Gastrocnemius medialis (tissue), 4 donors: ENCODE measurements at regions of chr3 and their contacts with region 1.

Region 1: GRCh38 chr3:149969940-149970715 is 567 bp downstream of the PFN2 start:
- DNase-seq: peak; percentile 75 to 90
- ATAC-seq: peak; percentile 48 to 59
- H3K4me3 ChIP-seq: peak overlapping the region; percentile 68 to 85 (median 81)
- H3K27ac ChIP-seq: peak overlapping the region; percentile 89 to 97 (median 97)
- H3K4me1 ChIP-seq: peaks cover 19 to 22% of the 10 kb centered on the region in 2 donors
- H3K27me3 ChIP-seq: no peaks in the 10 kb centered on the region
- CTCF ChIP-seq: no peak
- POLR2A ChIP-seq: peak; percentile 46 to 68

Region 2: GRCh38 chr3:149009732-149010131 is 960.4 kb before region 1 on chr3:
- in situ Hi-C with region 1: no loop called
- intact Hi-C with region 1: loop called (anchors 10 kb)
- DNase-seq: no peak
- ATAC-seq: peak in 1 of 2 donors; percentile 10
- H3K4me3 ChIP-seq: no peak overlapping the region
- H3K27ac ChIP-seq: peak overlapping the region; percentile 98 to 100 (median 100)
- H3K4me1 ChIP-seq: peaks cover 87 to 88% of the 10 kb centered on the region in 2 donors
- H3K27me3 ChIP-seq: no peaks in the 10 kb centered on the region
- CTCF ChIP-seq: no peak
- POLR2A ChIP-seq: no peak

Region 3: GRCh38 chr3:150035301-150035779 is 65.2 kb after region 1 on chr3:
- in situ Hi-C with region 1: no loop called
- intact Hi-C with region 1: loop called (anchors 2 kb)
- DNase-seq: peak; percentile 75 to 77
- ATAC-seq: peak; percentile 77 to 87
- H3K4me3 ChIP-seq: peak overlapping the region in 1 of 4 donors; percentile 18
- H3K27ac ChIP-seq: peak overlapping the region; percentile 91 to 98 (median 94)
- H3K4me1 ChIP-seq: peaks cover 17 to 31% of the 10 kb centered on the region in 2 donors
- H3K27me3 ChIP-seq: no peaks in the 10 kb centered on the region
- CTCF ChIP-seq: peak in 2 of 5 experiments; percentile 19 to 25
- POLR2A ChIP-seq: no peak

Region 4: DNA sequence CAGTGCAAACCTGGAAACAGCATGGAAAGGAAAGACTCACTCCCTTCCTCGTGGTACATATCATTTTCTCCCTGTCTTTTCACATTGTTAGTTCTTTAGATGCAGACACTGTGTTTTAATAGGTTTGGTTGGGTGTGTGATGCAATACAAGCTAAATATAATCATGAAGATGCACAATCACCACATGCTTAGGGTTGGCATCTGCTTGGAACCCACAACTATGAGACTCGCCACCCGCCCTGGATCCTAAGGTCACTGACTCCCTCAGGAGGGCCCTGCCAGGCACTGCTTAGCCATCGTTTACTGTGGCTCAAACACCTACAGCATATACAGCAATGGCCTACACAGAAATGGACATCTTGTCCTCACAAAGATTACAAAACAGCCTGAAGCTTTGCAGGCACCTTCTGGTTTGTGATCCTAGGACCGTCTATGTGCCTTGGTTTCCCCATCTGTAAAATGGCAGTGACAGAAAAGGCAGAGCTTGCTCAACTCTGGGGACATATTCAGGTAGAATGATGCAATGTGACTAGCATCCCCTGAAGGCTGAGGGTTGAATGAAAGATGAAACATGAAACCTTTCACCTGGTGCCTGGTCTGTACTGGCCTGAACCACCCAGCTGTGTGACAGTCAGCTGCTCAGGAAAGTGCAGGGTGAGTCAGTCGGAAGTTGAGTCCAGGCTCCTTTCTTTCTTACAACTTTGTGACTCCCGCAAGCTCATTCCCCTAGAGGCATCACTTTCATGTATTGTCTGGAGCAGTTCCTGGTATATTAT is 124.2 kb after region 1 on chr3:
- in situ Hi-C with region 1: no loop called
- intact Hi-C with region 1: loop called (anchors 1 kb)
- DNase-seq: peak; percentile 91 to 95
- ATAC-seq: peak; percentile 79 to 88
- H3K4me3 ChIP-seq: peak overlapping the region in 1 of 4 donors; percentile 24
- H3K27ac ChIP-seq: peak overlapping the region; percentile 82 to 97 (median 90)
- H3K4me1 ChIP-seq: peaks cover 35 to 60% of the 10 kb centered on the region in 2 donors
- H3K27me3 ChIP-seq: no peaks in the 10 kb centered on the region
- CTCF ChIP-seq: peak in 2 of 5 experiments; percentile 5 to 15
- POLR2A ChIP-seq: peak; percentile 31 to 55

Region 5: DNA sequence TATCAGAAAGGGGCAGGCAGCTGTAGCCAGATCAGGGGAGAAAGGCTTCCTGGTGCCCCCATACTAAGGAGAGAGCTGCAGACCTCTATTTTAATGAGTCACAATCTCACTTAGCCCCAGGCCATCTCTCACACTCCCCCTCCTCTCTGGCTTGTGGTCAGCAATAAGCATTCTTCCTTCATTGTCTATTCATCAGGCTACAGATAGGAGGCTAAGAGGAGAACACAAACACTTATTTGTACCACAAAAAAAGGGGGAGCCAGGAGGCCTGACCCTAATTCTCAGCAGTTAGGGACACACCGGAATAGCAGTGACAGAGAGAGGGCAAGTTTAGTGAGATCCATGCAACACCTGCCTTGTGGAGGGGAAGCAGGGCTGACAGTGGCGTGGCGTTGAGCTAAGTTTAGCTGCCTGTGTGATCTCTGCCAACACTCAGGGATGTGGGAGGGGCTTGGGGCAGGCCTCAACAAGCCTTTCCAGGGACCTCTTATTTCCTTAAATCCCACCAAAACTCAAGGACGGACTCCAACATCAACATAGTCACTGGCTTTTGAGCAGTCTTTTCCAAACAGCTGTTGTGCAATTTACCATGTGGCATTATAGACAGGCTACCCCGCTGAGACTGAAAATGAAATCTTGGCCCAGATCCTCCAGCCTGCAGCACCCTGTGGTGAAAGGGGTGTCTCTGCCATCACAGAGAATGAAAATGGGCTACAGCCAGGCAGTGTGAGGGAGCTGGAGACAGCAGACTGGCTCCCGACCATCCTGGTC is 246.1 kb after region 1 on chr3:
- in situ Hi-C with region 1: loop called in 1 of 4 experiments (anchors 10 kb)
- intact Hi-C with region 1: loop called (anchors 1 kb)
- DNase-seq: peak; percentile 29 to 68
- ATAC-seq: peak; percentile 78 to 92
- H3K4me3 ChIP-seq: no peak overlapping the region
- H3K27ac ChIP-seq: peak overlapping the region; percentile 66 to 77 (median 73)
- H3K4me1 ChIP-seq: peaks cover 13 to 17% of the 10 kb centered on the region in 2 donors
- H3K27me3 ChIP-seq: no peaks in the 10 kb centered on the region
- CTCF ChIP-seq: no peak
- POLR2A ChIP-seq: no peak